Activated CD4-positive, alpha-beta T cell treated with anti-CD3 and anti-CD28 coated beads, Interleukin-2, amount 10 ng/mL, durations not matched to agents 7 days and 5 days (primary cell): ENCODE measurements at regions of chr10 and their contacts with region 1.

Region 1: GRCh38 chr10:100743626-100744135 is 1.7 kb upstream of the PAX2 start:
- DNase-seq: peak; percentile 50
- H3K4me3 Mint-ChIP-seq: no peak overlapping the region
- H3K27ac Mint-ChIP-seq: peak overlapping the region; percentile 13
- H3K4me1 Mint-ChIP-seq: peaks cover 22% of the 10 kb centered on the region
- H3K27me3 Mint-ChIP-seq: peaks cover 85% of the 10 kb centered on the region

Region 2: DNA sequence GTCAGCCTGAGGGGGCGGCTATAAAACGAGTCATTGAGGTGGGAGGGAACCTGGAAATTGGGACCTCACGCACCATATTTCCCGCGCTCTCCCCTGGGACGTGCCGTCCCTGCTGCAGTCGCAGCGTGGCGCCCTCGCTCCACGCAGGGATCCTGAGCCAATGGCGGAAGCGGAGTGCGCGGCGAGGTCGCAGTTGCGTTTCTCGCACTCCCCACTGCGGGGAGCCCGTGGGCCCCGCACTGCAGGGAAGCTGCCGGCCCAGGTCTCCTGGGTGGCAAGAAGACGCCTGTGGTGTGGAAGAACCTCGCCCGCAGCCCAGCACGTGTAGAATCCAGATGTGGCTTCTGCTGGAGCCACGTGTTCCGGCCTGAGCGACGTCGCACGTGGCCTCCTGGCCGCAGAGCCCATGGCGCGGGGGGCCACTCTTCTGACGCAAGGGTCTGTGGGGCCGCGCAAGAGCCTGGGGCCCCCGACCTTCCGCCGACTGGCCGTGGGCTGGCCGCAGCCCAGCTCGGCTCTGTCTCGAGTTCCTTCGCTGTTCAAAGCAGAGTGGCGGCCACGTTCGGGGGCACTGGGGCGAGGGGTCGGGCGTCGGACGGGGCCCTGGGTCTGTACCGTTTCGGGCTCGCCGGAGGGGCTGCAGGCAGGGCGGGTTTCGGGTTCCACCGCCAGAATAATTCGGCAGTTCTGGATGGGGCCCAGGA is 181.5 kb before region 1 on chr10:
- CTCF ChIA-PET with region 1: interaction called, 19 read pairs
- POLR2A ChIA-PET with region 1: no interaction called
- DNase-seq: peak; percentile 81
- H3K4me3 Mint-ChIP-seq: no peak overlapping the region
- H3K27ac Mint-ChIP-seq: no peak overlapping the region
- H3K4me1 Mint-ChIP-seq: peaks cover 18% of the 10 kb centered on the region
- H3K27me3 Mint-ChIP-seq: peaks cover 32% of the 10 kb centered on the region

Region 3: DNA sequence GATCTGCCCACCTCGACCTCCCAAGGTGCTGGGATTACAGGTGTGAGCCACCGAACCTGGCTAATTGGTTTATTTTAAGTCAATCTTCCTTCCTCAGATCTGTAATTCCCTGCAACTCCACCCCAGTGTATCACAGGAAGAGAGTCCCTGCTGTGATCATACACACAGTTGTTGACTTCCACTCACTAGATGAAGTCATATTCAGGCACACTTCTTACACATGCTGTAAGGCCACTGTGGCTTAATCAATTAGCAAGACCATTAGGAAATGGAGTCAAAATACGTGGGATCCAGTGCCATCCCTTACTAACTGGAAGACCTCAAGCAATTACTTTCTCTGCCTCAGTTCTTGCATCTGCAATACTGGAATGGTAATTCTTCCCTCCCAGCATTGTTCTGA is 64.4 kb before region 1 on chr10:
- CTCF ChIA-PET with region 1: interaction called, 15 read pairs
- POLR2A ChIA-PET with region 1: no interaction called
- DNase-seq: no peak
- H3K4me3 Mint-ChIP-seq: no peak overlapping the region
- H3K27ac Mint-ChIP-seq: no peak overlapping the region
- H3K4me1 Mint-ChIP-seq: no peaks in the 10 kb centered on the region
- H3K27me3 Mint-ChIP-seq: peaks cover 62% of the 10 kb centered on the region

Region 4: GRCh38 chr10:100710151-100710871 is 33.4 kb before region 1 on chr10:
- CTCF ChIA-PET with region 1: interaction called, 10 read pairs
- POLR2A ChIA-PET with region 1: no interaction called
- DNase-seq: no peak
- H3K4me3 Mint-ChIP-seq: no peak overlapping the region
- H3K27ac Mint-ChIP-seq: no peak overlapping the region
- H3K4me1 Mint-ChIP-seq: peaks cover 3% of the 10 kb centered on the region
- H3K27me3 Mint-ChIP-seq: peaks cover 76% of the 10 kb centered on the region

Region 5: DNA sequence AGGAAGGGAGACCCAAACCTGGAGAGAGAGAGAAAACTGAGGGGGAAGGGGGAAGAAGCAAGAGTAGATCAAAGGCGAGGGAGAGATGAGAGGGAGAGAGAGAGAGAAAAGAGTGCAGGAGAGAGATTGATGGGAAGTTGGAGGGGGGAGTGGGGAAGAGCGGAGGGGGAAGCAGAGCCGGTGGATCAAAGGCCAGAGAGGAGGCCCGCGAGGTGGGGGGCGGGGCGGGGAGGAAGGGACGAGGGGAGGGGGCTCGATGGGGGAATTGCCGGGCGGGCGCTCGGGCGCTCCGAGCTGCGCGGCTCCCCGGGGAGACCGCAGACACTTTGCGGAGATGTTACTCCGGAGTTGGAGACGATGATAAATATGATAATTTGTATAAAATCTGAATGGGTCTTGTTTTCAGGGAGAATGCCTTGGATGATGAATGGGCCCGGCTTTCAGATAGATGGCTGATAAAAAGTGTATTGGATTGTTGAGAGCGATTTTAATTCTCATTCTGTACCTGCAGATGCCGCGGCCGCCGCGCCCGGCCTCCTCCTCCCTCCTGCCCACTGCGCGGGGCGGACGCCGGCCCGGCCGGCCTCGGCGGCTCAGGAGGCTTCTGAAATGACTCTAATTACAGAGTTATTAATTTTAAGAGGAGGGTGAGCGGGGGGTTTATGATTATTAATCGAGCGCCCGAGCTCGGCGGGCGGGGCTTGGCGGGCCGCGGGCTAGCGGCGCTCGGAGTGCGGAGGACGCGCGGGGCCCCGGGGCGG is 19.7 kb before region 1 on chr10:
- CTCF ChIA-PET with region 1: interaction called, 10 read pairs
- POLR2A ChIA-PET with region 1: no interaction called
- DNase-seq: no peak
- H3K4me3 Mint-ChIP-seq: no peak overlapping the region
- H3K27ac Mint-ChIP-seq: no peak overlapping the region
- H3K4me1 Mint-ChIP-seq: peaks cover 3% of the 10 kb centered on the region
- H3K27me3 Mint-ChIP-seq: peaks cover 81% of the 10 kb centered on the region